Caco-2 (cell line): ENCODE measurements at regions of chr3 and their contacts with region 1.

Region 1: DNA sequence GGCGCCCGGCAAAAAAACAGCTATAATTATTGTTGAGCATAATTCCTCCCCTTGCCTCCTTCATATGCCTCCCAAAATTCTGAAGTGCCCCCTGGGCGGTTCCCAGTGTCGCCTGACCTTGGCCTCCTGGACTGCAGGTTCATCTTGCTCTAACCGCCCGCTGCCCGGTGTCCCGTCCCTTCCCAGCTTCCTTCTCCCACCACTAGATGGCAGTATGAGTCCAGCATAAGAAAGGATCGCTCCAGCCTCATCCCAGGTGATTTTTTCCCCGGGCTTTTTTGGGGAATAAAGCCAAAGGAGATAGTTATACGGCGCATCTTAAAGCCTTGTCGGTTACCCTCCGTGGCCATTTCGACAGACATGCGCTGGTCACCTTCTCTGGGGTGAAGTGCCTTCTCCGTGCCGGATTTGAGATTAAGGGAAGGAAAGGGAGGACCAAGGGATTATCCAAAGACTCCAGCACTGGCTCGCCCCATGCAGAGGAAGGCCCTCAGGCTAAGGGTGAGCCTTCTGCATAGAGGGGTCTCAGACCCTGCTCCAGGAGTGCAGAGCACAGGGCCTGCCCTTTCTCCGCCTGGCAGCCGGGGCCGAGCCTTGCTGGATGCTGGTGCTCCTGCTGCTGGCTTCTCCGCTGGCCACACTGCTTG is 45.8 kb upstream of the TRA2B start:
- DNase-seq: peak; percentile 67 to 84
- H3K4me3 ChIP-seq: no peak overlapping the region
- H3K4me3 Mint-ChIP-seq: no peak overlapping the region
- H3K27ac Mint-ChIP-seq: no peak overlapping the region
- H3K4me1 ChIP-seq: no peaks in the 10 kb centered on the region
- H3K4me1 Mint-ChIP-seq: no peaks in the 10 kb centered on the region
- H3K27me3 ChIP-seq: no peaks in the 10 kb centered on the region
- H3K27me3 Mint-ChIP-seq: peaks cover 6% of the 10 kb centered on the region
- CTCF ChIP-seq: peak; percentile 81 to 88

Region 2: GRCh38 chr3:185942907-185943759 is 40.5 kb before region 1 on chr3:
- CTCF ChIA-PET with region 1: interaction called, 13 read pairs
- POLR2A ChIA-PET with region 1: interaction called, 3 read pairs
- intact Hi-C with region 1: no loop called
- DNase-seq: peak; percentile 87 to 88
- H3K4me3 ChIP-seq: no peak overlapping the region
- H3K4me3 Mint-ChIP-seq: no peak overlapping the region
- H3K27ac Mint-ChIP-seq: peak overlapping the region; percentile 13
- H3K4me1 ChIP-seq: peaks cover 15% of the 10 kb centered on the region
- H3K4me1 Mint-ChIP-seq: peaks cover 20% of the 10 kb centered on the region
- H3K27me3 ChIP-seq: no peaks in the 10 kb centered on the region
- H3K27me3 Mint-ChIP-seq: no peaks in the 10 kb centered on the region
- CTCF ChIP-seq: peak; percentile 92 to 97

Region 3: DNA sequence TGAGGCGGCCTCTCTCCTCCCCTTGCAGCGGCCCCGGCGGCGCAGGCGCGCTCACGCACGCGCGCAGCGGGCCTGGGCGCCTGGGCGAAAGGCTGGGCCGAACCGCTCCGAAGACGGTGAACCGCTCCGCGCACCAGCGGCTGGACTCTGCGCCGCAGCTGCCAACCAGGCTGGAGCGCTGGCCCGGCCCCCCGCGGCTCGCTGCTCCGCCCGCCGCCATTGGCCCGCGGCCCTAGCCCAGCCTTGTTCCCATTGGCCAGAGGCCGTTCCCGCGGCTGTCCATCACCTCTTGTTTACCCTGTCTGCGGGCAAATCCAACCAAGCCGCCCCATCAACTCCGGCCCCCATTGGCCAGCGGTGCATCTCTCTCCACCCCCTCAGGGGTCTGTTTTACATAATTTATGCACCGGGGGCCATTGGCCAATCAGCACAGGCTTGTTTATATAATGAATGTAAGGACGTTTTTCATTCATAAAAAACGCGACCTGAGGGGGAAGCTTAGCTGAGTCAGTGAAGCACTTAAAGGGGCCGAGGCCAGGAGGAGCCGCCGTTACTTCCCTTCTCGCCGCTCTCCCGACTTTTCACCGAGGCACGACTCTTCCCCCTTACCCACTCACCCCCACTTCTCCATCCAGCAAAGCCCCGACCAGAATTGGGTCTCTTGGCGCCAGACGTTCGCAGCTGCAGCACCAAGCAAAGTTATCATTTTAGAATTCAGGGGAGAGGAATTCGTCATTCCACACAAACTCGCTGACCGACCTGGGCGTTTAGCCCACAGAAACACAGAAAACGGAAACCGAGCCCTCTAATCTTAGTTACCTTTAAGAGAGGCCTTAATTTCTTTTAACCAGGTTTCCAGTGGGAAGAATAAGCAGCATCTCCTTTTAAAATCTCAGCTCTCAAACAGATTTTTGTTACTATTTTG is 125.6 kb after region 1 on chr3 and contains the start of gene ETV5:
- CTCF ChIA-PET with region 1: no interaction called
- POLR2A ChIA-PET with region 1: no interaction called
- intact Hi-C with region 1: loop called (anchors 5 kb)
- DNase-seq: peak; percentile 99
- H3K4me3 ChIP-seq: peak within 1 kb of the TSS; percentile 64
- H3K4me3 Mint-ChIP-seq: peak within 1 kb of the TSS; percentile 80
- H3K27ac Mint-ChIP-seq: peak within 1 kb of the TSS; percentile 79
- H3K4me1 ChIP-seq: peaks cover 8% of the 10 kb centered on the region; the same call in 1 of the 2 replicates
- H3K4me1 Mint-ChIP-seq: peaks cover 25% of the 10 kb centered on the region
- H3K27me3 ChIP-seq: no peaks in the 10 kb centered on the region
- H3K27me3 Mint-ChIP-seq: no peaks in the 10 kb centered on the region
- CTCF ChIP-seq: no peak
- total RNA-seq, gene ETV5: 16.2 and 18.6 TPM in 2 replicates

Region 4: DNA sequence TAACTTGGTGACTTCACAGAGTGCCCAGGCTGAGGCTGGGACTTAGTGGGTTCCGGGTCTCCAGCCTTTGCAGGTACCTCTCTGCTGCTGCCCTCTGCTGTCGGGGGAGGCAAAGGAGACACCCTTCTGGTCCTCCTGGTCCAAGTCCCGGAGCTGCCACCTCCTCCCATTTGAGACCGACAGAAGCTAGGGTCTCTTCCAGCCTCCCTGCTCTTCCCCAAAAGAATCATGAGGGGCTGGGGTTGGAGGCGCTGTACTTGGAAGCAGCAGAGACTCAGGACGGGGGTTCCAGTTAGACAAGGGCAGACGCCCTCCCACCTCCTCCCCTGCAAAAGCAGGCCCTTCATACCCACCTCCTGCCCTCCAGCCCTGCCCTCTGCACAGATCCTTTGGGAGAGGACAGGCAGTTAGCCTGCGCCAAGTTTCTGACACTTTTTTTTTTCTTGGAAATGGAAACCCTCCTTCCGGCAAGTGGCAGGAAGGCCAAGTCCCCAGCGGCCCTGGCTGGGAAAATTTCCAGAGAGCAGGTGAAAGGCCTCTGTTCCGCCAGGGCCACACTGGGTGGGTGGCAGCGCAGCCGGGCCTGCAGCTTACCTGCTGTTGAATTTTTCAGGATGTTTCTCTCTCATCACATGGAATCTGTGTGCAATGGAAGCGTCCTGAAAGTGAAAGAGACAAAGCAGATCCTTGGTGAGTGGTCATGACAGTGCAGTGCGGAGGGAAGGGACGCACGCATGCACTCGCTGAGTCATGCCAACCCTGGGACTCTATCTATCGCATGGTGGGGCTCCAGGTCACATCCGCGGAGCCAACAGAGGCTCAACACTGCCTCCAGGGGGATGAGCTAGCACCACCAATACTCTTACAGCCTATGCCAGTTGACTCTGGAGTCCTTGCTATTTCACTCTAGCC is 258.5 kb after region 1 on chr3:
- CTCF ChIA-PET with region 1: interaction called, 7 read pairs
- POLR2A ChIA-PET with region 1: no interaction called
- intact Hi-C with region 1: loop called (anchors 1 kb)
- DNase-seq: peak; percentile 68 to 70
- H3K4me3 ChIP-seq: no peak overlapping the region
- H3K4me3 Mint-ChIP-seq: no peak overlapping the region
- H3K27ac Mint-ChIP-seq: no peak overlapping the region
- H3K4me1 ChIP-seq: no peaks in the 10 kb centered on the region
- H3K4me1 Mint-ChIP-seq: no peaks in the 10 kb centered on the region
- H3K27me3 ChIP-seq: no peaks in the 10 kb centered on the region
- H3K27me3 Mint-ChIP-seq: no peaks in the 10 kb centered on the region
- CTCF ChIP-seq: peak; percentile 61 to 71

Region 5: GRCh38 chr3:186268616-186269448 is 285.2 kb after region 1 on chr3:
- CTCF ChIA-PET with region 1: no interaction called
- POLR2A ChIA-PET with region 1: no interaction called
- intact Hi-C with region 1: loop called (anchors 2 kb)
- DNase-seq: peak; percentile 46 to 53
- H3K4me3 ChIP-seq: no peak overlapping the region
- H3K4me3 Mint-ChIP-seq: no peak overlapping the region
- H3K27ac Mint-ChIP-seq: no peak overlapping the region
- H3K4me1 ChIP-seq: no peaks in the 10 kb centered on the region
- H3K4me1 Mint-ChIP-seq: no peaks in the 10 kb centered on the region
- H3K27me3 ChIP-seq: no peaks in the 10 kb centered on the region
- H3K27me3 Mint-ChIP-seq: peaks cover 4% of the 10 kb centered on the region
- CTCF ChIP-seq: peak; percentile 32 to 51

Region 6: DNA sequence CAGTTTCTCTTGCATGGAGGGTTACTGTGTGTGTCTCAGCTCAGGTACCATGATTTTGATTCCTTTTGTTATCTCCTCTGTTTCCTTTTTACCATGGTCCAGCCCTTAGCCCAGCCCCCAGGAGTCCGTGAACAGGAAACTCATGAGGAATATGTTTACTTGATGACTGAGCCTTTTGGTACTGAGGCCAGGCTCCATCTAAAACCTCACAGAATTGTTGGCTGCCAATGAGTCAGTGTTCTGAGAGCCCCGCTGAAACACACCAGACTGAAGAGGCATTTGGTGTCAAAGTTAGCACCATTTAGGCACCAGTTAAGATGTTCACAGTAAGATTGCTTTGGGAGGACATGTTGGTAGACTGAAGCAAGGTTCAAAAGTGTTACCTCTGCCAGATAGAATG is 297.6 kb after region 1 on chr3:
- CTCF ChIA-PET with region 1: no interaction called
- POLR2A ChIA-PET with region 1: no interaction called
- intact Hi-C with region 1: no loop called
- DNase-seq: no peak
- H3K4me3 ChIP-seq: no peak overlapping the region
- H3K4me3 Mint-ChIP-seq: no peak overlapping the region
- H3K27ac Mint-ChIP-seq: no peak overlapping the region
- H3K4me1 ChIP-seq: no peaks in the 10 kb centered on the region
- H3K4me1 Mint-ChIP-seq: no peaks in the 10 kb centered on the region
- H3K27me3 ChIP-seq: no peaks in the 10 kb centered on the region
- H3K27me3 Mint-ChIP-seq: peaks cover 8% of the 10 kb centered on the region
- CTCF ChIP-seq: no peak

Region 7: DNA sequence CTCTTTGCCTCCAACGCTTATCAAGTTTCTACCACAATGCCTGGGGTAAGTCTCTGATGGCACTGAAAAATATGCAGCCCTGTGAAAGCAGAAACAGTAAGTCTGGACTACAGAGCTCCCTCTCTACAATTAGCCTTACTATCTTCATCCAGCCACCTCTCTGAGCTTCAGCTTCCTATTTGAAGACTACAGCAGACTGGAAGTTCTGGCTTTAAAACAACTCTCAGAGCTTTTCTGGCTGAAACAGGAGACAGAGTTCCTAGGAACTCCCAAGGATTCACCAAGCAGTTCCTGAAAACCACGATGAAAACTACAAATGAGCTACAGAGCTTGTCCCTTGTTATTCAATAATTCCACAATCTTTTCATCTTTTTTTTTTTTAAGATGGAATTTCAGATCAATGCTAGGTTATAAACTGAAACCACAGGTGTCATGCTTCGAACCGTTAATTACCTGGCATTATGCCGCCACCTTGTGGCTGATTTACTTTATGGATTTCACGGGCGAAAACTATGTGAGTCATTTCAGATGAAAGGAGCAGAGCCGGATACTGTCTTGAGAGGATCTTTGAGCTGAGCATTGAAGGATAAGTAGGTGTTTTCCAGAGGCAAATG is 556.7 kb after region 1 on chr3:
- CTCF ChIA-PET with region 1: interaction called, 6 read pairs
- POLR2A ChIA-PET with region 1: no interaction called
- intact Hi-C with region 1: loop called (anchors 1 kb)
- DNase-seq: peak; percentile 66 to 76
- H3K4me3 ChIP-seq: no peak overlapping the region
- H3K4me3 Mint-ChIP-seq: no peak overlapping the region
- H3K27ac Mint-ChIP-seq: no peak overlapping the region
- H3K4me1 ChIP-seq: no peaks in the 10 kb centered on the region
- H3K4me1 Mint-ChIP-seq: peaks cover 9% of the 10 kb centered on the region
- H3K27me3 ChIP-seq: no peaks in the 10 kb centered on the region
- H3K27me3 Mint-ChIP-seq: no peaks in the 10 kb centered on the region
- CTCF ChIP-seq: peak; percentile 67